ENCODE measurements at regions of chr18 and their contacts with region 1.

Region 1: DNA sequence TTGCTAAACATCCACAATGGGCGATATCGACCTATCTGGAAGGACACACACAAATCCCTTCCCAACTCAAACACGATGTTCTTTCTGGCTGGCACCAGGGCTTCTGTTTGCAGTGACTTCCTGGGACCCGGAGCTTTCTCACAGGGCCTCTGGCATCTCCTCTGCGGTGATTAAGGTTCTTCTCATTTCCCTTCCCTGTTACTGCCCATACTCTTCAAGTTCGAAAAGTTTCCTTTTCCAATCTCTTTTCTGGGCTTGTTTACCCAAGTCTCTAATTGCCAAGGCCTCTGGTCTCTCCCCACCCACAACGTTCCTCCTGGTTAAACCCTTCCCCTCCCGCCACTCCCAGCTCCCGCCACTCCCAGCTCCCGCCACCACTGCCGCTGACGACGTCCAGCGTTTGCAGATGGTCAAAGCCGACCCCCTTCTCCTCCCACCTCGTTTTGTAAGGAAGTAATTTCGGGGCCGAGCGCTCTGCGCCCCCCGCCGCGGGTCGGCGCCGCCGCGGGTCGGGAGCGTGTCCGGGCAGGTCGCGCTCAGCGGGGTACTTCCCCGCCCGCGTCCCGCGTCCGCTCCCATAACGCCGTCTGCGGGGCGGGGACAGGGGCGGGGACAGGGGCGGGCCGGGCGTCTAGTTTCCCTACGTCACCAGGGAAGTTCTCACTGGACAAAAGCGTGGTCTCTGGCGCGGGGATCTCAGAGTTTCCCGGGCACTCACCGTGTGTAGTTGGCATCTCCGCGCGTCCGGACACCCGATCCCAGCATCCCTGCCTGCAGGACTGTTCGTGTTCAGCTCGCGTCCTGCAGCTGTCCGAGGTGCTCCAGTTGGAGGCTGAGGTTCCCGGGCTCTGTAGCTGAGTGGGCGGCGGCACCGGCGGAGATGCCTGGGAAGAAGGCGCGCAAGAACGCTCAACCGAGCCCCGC is at the start of gene PMAIP1:
- DNase-seq: peak; percentile 72 to 91
- ATAC-seq: peak; percentile 89 to 90
- H3K4me3 ChIP-seq: peak within 1 kb of the TSS; percentile 94
- H3K27ac ChIP-seq: peak within 1 kb of the TSS; percentile 90 to 96
- H3K4me1 ChIP-seq: peaks cover 40% of the 10 kb centered on the region
- CTCF ChIP-seq: no peak
- EP300 ChIP-seq: no peak
- POLR2A ChIP-seq: peak; percentile 99
- RAD21 ChIP-seq: peak in 1 of 2 experiments; percentile 15; a peak in 1 of 5 replicates
- polyA plus RNA-seq, gene PMAIP1: 23.1 and 40.3 TPM in 2 replicates

Region 2: DNA sequence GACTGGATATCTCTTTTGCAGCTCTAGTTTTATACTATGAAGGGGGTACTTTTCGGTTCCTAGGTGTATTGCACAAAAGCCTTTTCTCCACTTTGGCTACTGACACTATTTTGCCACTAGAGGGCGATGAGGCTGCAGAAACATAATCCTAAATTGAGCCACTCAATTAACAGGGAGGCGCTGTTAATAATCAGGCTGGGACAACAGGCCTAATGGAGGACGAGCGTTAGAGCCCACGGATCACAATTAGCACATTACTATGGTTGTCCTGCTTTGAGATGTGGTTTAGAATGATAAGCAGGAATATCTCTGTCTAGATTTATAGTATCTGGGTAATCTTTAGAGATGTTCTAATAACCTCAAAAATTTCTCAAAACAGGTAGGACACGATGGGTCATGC is 62.0 kb before region 1 on chr18:
- CTCF ChIA-PET with region 1: interaction called, 14 read pairs
- POLR2A ChIA-PET with region 1: interaction called, 12 read pairs
- DNase-seq: peak; percentile 56 to 60
- ATAC-seq: peak; percentile 68 to 81
- H3K4me3 ChIP-seq: no peak overlapping the region
- H3K27ac ChIP-seq: 0 out of 6 replicates have a peak overlapping the region, but pooled peaks of 1 of the 2 experiments have one; percentile 28
- H3K4me1 ChIP-seq: no peaks in the 10 kb centered on the region
- CTCF ChIP-seq: peak; percentile 79
- EP300 ChIP-seq: no peak
- POLR2A ChIP-seq: no peak
- RAD21 ChIP-seq: peak; percentile 79 to 80

Region 3: GRCh38 chr18:59870623-59871130 is 28.9 kb before region 1 on chr18:
- CTCF ChIA-PET with region 1: no interaction called
- POLR2A ChIA-PET with region 1: interaction called, 12 read pairs
- DNase-seq: no peak
- ATAC-seq: no peak
- H3K4me3 ChIP-seq: no peak overlapping the region
- H3K27ac ChIP-seq: no peak overlapping the region
- H3K4me1 ChIP-seq: peaks cover 12% of the 10 kb centered on the region
- CTCF ChIP-seq: no peak
- EP300 ChIP-seq: no peak
- POLR2A ChIP-seq: no peak
- RAD21 ChIP-seq: no peak

Region 4: GRCh38 chr18:59881728-59882656 is 17.6 kb before region 1 on chr18:
- CTCF ChIA-PET with region 1: interaction called, 3 read pairs
- POLR2A ChIA-PET with region 1: interaction called, 18 read pairs
- DNase-seq: peak in 1 of 2 experiments; percentile 64
- ATAC-seq: peak; percentile 72 to 87
- H3K4me3 ChIP-seq: no peak overlapping the region
- H3K27ac ChIP-seq: peak overlapping the region; percentile 77 to 85
- H3K4me1 ChIP-seq: peaks cover 31% of the 10 kb centered on the region
- CTCF ChIP-seq: no peak
- EP300 ChIP-seq: no peak
- POLR2A ChIP-seq: no peak
- RAD21 ChIP-seq: no peak

Region 5: DNA sequence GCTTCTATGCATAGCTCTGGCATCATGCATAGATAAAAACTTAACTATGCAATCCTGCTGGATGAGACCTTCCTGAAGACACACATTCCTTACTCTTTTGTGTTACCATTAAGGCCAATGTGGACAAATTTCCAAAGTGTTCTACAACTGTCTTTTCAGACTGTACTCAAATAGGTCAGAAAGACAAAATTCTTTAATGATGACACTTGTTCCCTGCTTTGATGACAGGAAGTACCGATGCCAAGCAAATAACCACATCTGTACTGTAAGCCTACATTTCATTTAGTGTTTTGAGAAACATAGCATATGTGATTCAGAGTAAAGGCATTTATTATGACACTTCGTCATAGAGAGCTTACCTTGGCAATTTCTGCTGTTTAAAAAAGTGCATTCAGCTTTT is 55.2 kb after region 1 on chr18:
- CTCF ChIA-PET with region 1: no interaction called
- POLR2A ChIA-PET with region 1: interaction called, 28 read pairs
- DNase-seq: peak in 1 of 2 experiments; percentile 9
- ATAC-seq: 0 out of 6 replicates have a peak, but pooled peaks of 1 of the 2 experiments have one; percentile 24
- H3K4me3 ChIP-seq: no peak overlapping the region
- H3K27ac ChIP-seq: peak overlapping the region; percentile 60 to 63; a peak in 4 of 6 replicates
- H3K4me1 ChIP-seq: peaks cover 45% of the 10 kb centered on the region
- CTCF ChIP-seq: no peak
- EP300 ChIP-seq: no peak
- POLR2A ChIP-seq: no peak
- RAD21 ChIP-seq: no peak